Pancreas (tissue), 10 donors: ENCODE measurements at regions of chr9 and their contacts with region 1.

Region 1: GRCh38 chr9:17116400-17116837 is 18.4 kb upstream of the CNTLN start:
- DNase-seq: no peak
- ATAC-seq: peak in 3 of 4 donors; percentile 62 to 75 (median 69)
- H3K4me3 ChIP-seq: no peak overlapping the region
- H3K27ac ChIP-seq: no peak overlapping the region
- H3K4me1 ChIP-seq: no peaks in the 10 kb centered on the region
- H3K27me3 ChIP-seq: peaks cover 0 to 4% (median 0%) of the 10 kb centered on the region in 4 donors
- CTCF ChIP-seq: peak in 3 of 4 donors; percentile 8 to 44 (median 31)

Region 2: DNA sequence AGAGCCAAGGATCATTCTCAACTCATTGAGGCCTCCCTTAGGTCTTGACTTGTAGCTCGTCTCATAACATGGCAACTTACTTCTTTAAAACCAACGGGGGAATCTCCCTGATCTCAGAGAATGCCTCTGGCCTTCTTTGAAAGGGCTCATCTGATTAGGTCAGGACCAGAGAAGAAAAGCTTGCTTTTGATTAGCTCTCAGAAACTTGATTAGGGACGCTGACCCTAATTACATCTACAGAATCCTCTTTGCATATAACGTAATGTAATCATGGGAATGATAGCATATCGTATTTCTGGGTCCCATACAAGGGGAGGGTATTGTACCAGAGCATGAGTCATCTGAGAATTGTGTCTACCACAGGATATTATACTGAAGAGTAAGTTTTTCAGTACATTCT is 337.3 kb after region 1 on chr9:
- intact Hi-C with region 1: loop called in 1 of 3 experiments (anchors 10 kb)
- DNase-seq: no peak
- ATAC-seq: no peak
- H3K4me3 ChIP-seq: no peak overlapping the region
- H3K27ac ChIP-seq: no peak overlapping the region
- H3K4me1 ChIP-seq: no peaks in the 10 kb centered on the region
- H3K27me3 ChIP-seq: no peaks in the 10 kb centered on the region
- CTCF ChIP-seq: no peak

Region 3: GRCh38 chr9:17462869-17463464 is 346.5 kb after region 1 on chr9:
- intact Hi-C with region 1: loop called (anchors 10 kb)
- DNase-seq: peak in 1 of 6 donors; percentile 33
- ATAC-seq: peak in 3 of 4 donors; percentile 56 to 77 (median 61)
- H3K4me3 ChIP-seq: no peak overlapping the region
- H3K27ac ChIP-seq: no peak overlapping the region
- H3K4me1 ChIP-seq: no peaks in the 10 kb centered on the region
- H3K27me3 ChIP-seq: no peaks in the 10 kb centered on the region
- CTCF ChIP-seq: peak; percentile 32 to 60 (median 46)